ENCODE measurements at regions of chr19 and their contacts with region 1.

Region 1: GRCh38 chr19:52189735-52190486 is at the start of gene PPP2R1A:
- DNase-seq: peak; percentile 99
- H3K4me3 Mint-ChIP-seq: peak within 1 kb of the TSS; percentile 85
- H3K27ac Mint-ChIP-seq: peak within 1 kb of the TSS; percentile 94
- H3K4me1 Mint-ChIP-seq: peaks cover 39% of the 10 kb centered on the region
- H3K27me3 Mint-ChIP-seq: no peaks in the 10 kb centered on the region
- total RNA-seq, gene PPP2R1A: 228 to 232 TPM

Region 2: DNA sequence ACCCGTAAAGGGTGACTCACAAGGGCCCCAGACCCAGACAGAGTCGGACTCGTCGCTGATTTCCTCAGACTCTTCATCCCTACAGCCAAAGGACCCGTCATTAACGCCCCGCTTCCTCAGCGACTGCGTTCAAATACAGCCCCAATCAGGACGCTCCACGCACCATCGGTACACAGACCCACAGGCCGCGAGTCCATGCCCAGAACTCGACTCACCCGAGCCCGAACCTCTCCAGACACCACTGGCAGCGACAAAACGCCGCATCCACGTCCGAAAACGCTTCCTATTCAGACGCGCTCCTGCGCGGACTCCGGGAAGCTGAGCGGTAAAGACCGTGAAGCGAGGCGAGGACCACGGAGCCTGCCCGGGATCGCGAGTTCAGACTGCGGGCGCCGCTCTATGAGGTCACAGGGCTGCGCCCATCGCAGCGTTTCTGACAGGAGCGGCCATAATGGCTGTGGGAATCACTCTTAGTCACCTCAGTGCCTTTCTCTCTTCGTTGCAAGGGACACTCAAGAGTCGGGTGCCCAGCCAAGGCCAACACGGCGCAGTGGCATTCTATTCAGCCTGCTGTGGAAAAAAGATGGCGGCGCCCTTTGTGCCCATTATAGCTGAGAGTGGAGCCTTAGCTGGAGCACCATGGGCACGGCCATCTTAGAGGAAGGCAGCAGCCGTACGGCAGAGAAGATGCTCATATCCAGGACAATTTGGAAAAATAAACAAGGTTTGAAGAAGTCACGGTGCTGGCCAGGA is 161.7 kb before region 1 on chr19 and contains the start of gene ZNF614:
- CTCF ChIA-PET with region 1: no interaction called
- intact Hi-C with region 1: loop called (anchors 10 kb)
- DNase-seq: peak; percentile 90
- H3K4me3 Mint-ChIP-seq: peak within 1 kb of the TSS; percentile 82
- H3K27ac Mint-ChIP-seq: peak within 1 kb of the TSS; percentile 91
- H3K4me1 Mint-ChIP-seq: peaks cover 26% of the 10 kb centered on the region
- H3K27me3 Mint-ChIP-seq: no peaks in the 10 kb centered on the region
- total RNA-seq, gene ZNF614: 7.5 to 8.2 TPM

Region 3: GRCh38 chr19:52139252-52140031 is 50.5 kb before region 1 on chr19 and contains the start of gene ZNF616:
- CTCF ChIA-PET with region 1: no interaction called
- intact Hi-C with region 1: loop called (anchors 1 kb)
- DNase-seq: peak; percentile 99
- H3K4me3 Mint-ChIP-seq: peak within 1 kb of the TSS; percentile 96
- H3K27ac Mint-ChIP-seq: peak within 1 kb of the TSS; percentile 93
- H3K4me1 Mint-ChIP-seq: peaks cover 24% of the 10 kb centered on the region
- H3K27me3 Mint-ChIP-seq: no peaks in the 10 kb centered on the region
- total RNA-seq, gene ZNF616: 7.6 to 8.7 TPM

Region 4: GRCh38 chr19:52171321-52172169 is 18.4 kb before region 1 on chr19 and contains the start of gene ZNF836:
- CTCF ChIA-PET with region 1: no interaction called
- intact Hi-C with region 1: loop called (anchors 1 kb)
- DNase-seq: peak; percentile 95
- H3K4me3 Mint-ChIP-seq: peak within 1 kb of the TSS; percentile 94
- H3K27ac Mint-ChIP-seq: peak within 1 kb of the TSS; percentile 95
- H3K4me1 Mint-ChIP-seq: peaks cover 26% of the 10 kb centered on the region
- H3K27me3 Mint-ChIP-seq: no peaks in the 10 kb centered on the region
- total RNA-seq, gene ZNF836: 10.7 to 11.1 TPM

Region 5: DNA sequence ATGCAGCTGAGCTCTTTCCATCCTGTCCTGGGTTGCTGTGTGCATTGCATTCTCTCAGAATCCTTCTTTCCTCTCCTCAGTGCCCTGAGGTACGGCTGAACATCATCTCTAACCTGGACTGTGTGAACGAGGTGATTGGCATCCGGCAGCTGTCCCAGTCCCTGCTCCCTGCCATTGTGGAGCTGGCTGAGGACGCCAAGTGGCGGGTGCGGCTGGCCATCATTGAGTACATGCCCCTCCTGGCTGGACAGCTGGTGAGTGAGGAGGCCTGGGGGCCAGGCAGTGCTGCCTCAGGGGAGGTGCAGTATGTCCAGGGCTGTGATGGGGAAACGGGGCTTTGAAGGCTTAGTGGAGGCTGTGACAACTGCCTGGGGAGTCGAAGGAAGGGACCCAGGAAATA is 29.7 kb after region 1 on chr19:
- CTCF ChIA-PET with region 1: no interaction called
- intact Hi-C with region 1: no loop called
- DNase-seq: no peak
- H3K4me3 Mint-ChIP-seq: no peak overlapping the region
- H3K27ac Mint-ChIP-seq: no peak overlapping the region
- H3K4me1 Mint-ChIP-seq: no peaks in the 10 kb centered on the region
- H3K27me3 Mint-ChIP-seq: no peaks in the 10 kb centered on the region

Region 6: DNA sequence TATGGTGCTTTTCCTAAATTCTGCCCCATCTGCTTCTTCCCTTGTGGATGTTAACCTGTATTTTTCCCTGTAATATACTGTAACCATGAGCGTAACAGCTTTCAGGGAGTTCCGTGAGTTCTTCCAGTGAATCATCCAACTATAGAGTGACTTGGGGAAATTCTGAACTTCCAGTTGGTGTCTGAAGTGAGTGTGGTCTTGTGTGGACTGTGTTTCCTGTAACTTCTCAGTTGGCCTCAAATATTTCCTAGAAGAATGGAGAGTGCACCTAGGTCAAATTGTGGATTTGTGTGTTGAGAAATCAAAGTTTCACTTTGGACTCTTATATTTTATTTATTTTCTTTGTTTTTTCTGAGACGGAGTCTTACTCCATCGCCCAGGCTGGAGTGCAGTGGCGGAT is 68.5 kb after region 1 on chr19:
- CTCF ChIA-PET with region 1: no interaction called
- intact Hi-C with region 1: no loop called
- DNase-seq: no peak
- H3K4me3 Mint-ChIP-seq: no peak overlapping the region
- H3K27ac Mint-ChIP-seq: no peak overlapping the region
- H3K4me1 Mint-ChIP-seq: no peaks in the 10 kb centered on the region
- H3K27me3 Mint-ChIP-seq: no peaks in the 10 kb centered on the region

Region 7: GRCh38 chr19:52269338-52270261 is 79.7 kb after region 1 on chr19 and contains the start of gene ZNF766:
- CTCF ChIA-PET with region 1: no interaction called
- intact Hi-C with region 1: loop called (anchors 1 kb)
- DNase-seq: peak; percentile 98
- H3K4me3 Mint-ChIP-seq: peak within 1 kb of the TSS; percentile 96
- H3K27ac Mint-ChIP-seq: peak within 1 kb of the TSS; percentile 91
- H3K4me1 Mint-ChIP-seq: peaks cover 27% of the 10 kb centered on the region
- H3K27me3 Mint-ChIP-seq: no peaks in the 10 kb centered on the region
- total RNA-seq, gene ZNF766: 22.3 to 23.6 TPM

Region 8: GRCh38 chr19:52637718-52638585 is 448.0 kb after region 1 on chr19 and contains the start of gene ZNF83:
- CTCF ChIA-PET with region 1: no interaction called
- intact Hi-C with region 1: loop called (anchors 1 kb)
- DNase-seq: peak; percentile 96
- H3K4me3 Mint-ChIP-seq: peak within 1 kb of the TSS; percentile 85
- H3K27ac Mint-ChIP-seq: peak within 1 kb of the TSS; percentile 92
- H3K4me1 Mint-ChIP-seq: peaks cover 9% of the 10 kb centered on the region
- H3K27me3 Mint-ChIP-seq: no peaks in the 10 kb centered on the region
- total RNA-seq, gene ZNF83: 23.3 to 23.9 TPM